ENCODE measurements at regions of chr6 and their contacts with region 1.

Region 1: GRCh38 chr6:109705258-109705657 is 14.2 kb downstream of the FIG4 start:
- DNase-seq: peak; percentile 80
- ATAC-seq: peak; percentile 90

Region 2: GRCh38 chr6:109783250-109783986 is 78.2 kb after region 1 on chr6:
- intact Hi-C with region 1: loop called (anchors 5 kb)
- DNase-seq: no peak
- ATAC-seq: no peak

Region 3: DNA sequence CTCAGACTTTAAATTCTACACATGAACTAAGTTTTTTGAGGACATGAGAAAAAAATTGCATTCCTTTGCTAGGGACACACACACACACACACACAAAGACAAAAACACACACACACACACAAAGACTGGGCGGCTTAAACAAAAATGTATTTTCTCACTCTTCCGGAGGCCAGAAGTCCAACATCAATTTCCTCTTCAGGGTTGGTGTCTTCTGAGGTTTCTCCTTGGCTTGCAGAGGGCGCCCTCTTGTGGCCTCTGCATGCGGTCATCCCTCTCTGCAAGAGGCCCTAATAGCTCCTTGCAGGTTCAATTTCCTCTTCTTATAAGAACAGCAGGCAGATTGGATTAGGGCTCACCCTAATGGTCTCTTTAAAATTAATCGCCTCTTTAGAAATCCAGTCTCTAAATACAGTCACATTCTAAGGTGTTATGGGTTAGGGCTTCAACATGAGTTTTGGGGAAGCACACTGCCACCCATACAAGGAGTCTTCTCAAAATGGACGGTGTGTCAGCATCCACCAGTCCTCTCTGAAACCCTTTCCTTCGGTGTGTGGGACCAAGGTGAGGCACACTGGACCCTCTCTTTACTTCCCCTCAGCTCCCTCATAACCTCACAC is 334.2 kb after region 1 on chr6:
- intact Hi-C with region 1: loop called (anchors 1 kb)
- DNase-seq: peak; percentile 90
- ATAC-seq: peak; percentile 94

Region 4: GRCh38 chr6:110179401-110180227 is 474.4 kb after region 1 on chr6 and contains the start of gene WASF1:
- intact Hi-C with region 1: loop called (anchors 10 kb)
- DNase-seq: peak; percentile 96
- ATAC-seq: peak; percentile 99
- total RNA-seq, gene WASF1: 1.8 TPM

Region 5: DNA sequence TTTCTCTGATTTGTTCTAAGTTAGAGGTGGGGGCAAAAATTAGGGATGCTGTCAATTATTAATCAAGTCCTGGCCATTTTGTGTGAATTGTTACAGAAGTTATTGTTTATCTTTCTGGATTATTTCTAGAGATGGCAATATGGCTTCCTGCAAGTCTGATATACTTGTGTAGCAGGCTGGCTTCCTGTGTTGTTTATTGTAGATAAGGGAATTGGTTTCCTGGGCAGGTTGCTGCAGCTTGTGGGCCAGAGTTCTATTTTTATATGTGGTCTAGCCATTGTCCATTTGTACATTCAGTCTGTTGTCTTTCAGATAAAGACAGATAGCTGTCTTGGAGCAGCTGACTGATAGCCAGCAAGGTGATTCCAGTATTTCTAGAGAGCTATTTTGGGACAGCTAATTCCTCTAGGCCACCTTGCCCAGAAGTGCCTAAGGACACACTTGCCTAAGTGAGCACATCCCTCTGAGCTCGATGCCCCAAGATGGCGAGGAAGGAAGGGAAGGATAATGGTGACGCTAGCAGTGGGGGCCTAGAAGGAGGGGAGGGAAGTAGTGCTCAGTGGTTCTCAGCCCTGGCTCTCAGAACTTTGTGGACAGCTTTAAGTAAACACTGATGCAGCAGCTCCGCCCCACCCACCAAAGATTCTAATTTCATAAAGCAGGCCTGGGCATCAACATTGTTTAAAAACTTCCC is 684.6 kb after region 1 on chr6:
- intact Hi-C with region 1: loop called (anchors 2 kb)
- DNase-seq: no peak
- ATAC-seq: peak; percentile 35

Measured in Right ventricle myocardium inferior (tissue), 1 donor.